Panc1 (cell line): ENCODE measurements at regions of chr18 and their contacts with region 1.

Region 1: DNA sequence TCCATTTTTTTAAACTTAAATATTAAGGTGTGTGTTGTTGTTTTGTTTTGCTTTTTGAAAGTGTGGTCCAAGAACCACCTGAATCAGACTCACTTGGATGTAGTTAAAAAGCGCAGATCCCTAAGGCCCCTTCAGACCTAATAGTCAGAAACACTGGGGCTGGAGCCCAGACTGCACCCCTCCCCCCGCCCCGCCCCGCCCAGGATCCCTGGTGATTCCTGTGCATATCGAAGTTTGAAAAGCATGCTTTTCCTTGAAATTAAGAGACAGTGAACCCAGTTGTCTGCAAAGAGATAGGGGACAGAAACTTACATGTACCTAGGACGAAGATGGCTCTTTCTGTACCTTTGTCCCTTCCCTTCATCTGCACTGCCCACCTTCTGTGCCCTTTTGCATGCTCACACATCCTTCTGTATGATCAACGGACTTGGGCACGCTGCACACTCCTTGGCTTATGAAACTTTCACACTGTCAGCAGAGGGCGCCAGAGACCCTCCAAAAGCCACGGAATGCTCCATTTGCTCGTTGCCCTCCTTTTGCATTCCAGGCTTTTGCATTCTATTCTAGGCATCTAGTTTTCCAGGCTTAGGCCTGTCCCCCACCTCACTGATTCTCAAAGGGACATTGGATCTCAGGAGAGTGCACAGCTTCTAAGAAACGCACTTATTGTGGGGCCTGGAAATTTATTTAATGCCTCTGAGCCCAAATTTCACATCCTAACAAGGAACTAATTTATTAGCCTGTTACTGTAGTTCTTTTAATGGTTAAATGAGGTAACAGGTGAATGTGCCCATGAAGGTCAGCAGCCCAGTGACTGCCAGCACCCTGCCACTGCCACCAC is 32.8 kb upstream of the SLC14A1 start:
- DNase-seq: peak; percentile 53
- ATAC-seq: peak; percentile 96
- H3K4me3 ChIP-seq: no peak overlapping the region
- H3K27ac ChIP-seq: no peak overlapping the region
- H3K4me1 ChIP-seq: no peaks in the 10 kb centered on the region
- H3K27me3 ChIP-seq: no peaks in the 10 kb centered on the region
- CTCF ChIP-seq: peak; percentile 72

Region 2: GRCh38 chr18:45839414-45840395 is 148.5 kb after region 1 on chr18:
- CTCF ChIA-PET with region 1: no interaction called
- POLR2A ChIA-PET with region 1: no interaction called
- in situ Hi-C with region 1: no loop called
- intact Hi-C with region 1: loop called (anchors 2 kb)
- DNase-seq: no peak
- ATAC-seq: peak; percentile 85
- H3K4me3 ChIP-seq: no peak overlapping the region
- H3K27ac ChIP-seq: peak overlapping the region; percentile 23; the same call in 1 of the 2 replicates
- H3K4me1 ChIP-seq: peaks cover 3% of the 10 kb centered on the region; the same call in 1 of the 2 replicates
- H3K27me3 ChIP-seq: no peaks in the 10 kb centered on the region
- CTCF ChIP-seq: peak; percentile 57; the same call in 1 of the 2 replicates

Region 3: GRCh38 chr18:45879681-45880655 is 188.8 kb after region 1 on chr18:
- CTCF ChIA-PET with region 1: no interaction called
- POLR2A ChIA-PET with region 1: no interaction called
- in situ Hi-C with region 1: no loop called
- intact Hi-C with region 1: loop called (anchors 2 kb)
- DNase-seq: peak; percentile 30
- ATAC-seq: peak; percentile 87
- H3K4me3 ChIP-seq: no peak overlapping the region
- H3K27ac ChIP-seq: no peak overlapping the region
- H3K4me1 ChIP-seq: no peaks in the 10 kb centered on the region
- H3K27me3 ChIP-seq: no peaks in the 10 kb centered on the region
- CTCF ChIP-seq: peak; percentile 89

Region 4: DNA sequence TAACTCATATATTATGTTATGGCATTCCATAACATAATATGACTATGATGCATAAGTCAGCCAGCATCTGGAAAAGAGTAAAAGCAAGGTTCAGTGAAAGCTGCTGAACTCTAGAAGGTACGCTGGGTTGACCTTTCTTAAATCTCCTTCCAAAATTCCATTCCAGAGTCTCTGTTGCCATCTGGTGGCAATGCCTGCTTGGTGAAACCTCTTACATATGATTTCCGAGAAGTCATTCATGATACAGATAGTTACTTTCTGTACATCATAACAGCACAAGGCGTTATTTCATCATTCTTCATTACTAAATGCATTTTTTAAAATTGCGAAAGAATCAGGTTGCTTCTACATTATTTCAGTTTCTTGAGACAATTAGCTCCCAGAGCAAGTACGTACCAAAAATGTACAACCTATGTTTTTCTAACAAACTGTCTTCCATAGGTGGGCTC is 282.9 kb after region 1 on chr18:
- CTCF ChIA-PET with region 1: no interaction called
- POLR2A ChIA-PET with region 1: no interaction called
- in situ Hi-C with region 1: no loop called
- intact Hi-C with region 1: loop called (anchors 5 kb)
- DNase-seq: no peak
- ATAC-seq: peak; percentile 83
- H3K4me3 ChIP-seq: peak overlapping the region in 1 of 2 experiments; percentile 23; a peak in 1 of 4 replicates
- H3K27ac ChIP-seq: no peak overlapping the region
- H3K4me1 ChIP-seq: no peaks in the 10 kb centered on the region
- H3K27me3 ChIP-seq: no peaks in the 10 kb centered on the region
- CTCF ChIP-seq: peak; percentile 66